Left cardiac atrium (tissue), 4 donors: ENCODE measurements at regions of chr3 and their contacts with region 1.

Region 1: DNA sequence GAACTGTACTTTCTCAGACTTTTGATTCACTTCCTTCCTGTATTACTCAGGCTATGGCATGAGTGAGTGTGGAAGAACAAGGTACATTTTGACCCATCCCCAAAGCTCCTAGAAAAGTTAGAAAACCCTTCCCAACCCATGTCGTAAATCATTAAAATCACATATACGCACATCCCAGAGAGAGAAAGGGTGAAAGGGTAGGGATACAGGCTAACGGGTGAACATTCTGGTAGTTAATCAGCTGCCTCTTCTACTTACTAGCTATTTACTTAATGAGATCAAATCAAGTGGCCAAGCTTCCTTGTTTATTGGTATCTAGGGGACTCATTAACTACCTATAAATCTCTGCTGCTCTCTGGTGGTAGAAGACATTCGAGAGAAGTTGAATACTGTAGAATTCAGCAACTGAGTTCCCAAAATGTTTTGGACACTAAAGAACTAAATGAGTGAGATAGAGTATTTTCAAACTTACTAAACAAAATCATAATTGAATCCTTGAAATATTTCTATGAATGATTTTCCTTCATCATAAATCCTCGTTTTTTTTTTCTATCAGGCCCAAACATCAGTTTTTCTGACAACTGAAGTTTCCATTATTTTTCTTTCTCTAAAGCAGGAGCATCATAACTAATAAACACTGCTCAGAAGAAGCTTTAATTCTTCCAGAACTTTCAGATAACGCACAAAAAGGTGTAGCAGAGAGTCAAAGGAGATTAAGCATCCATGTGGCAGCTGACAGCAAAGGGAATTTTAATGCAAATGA is 124.2 kb downstream of the IMPG2 start:
- DNase-seq: no peak
- ATAC-seq: peak; percentile 65 to 79

Region 2: GRCh38 chr3:100893590-100893989 is 302.5 kb before region 1 on chr3:
- intact Hi-C with region 1: loop called in 1 of 2 experiments (anchors 5 kb)
- DNase-seq: peak; percentile 25
- ATAC-seq: peak in 1 of 2 donors; percentile 49

Region 3: GRCh38 chr3:101069901-101070798 is 126.0 kb before region 1 on chr3:
- intact Hi-C with region 1: loop called in 1 of 2 experiments (anchors 5 kb)
- DNase-seq: peak; percentile 38
- ATAC-seq: peak in 1 of 2 donors; percentile 42